Panc1 (cell line): ENCODE measurements at regions of chr11 and their contacts with region 1.

Region 1: GRCh38 chr11:1303126-1303821 is 6.2 kb downstream of the TOLLIP start:
- DNase-seq: no peak
- ATAC-seq: peak; percentile 81
- H3K4me3 ChIP-seq: no peak overlapping the region
- H3K27ac ChIP-seq: no peak overlapping the region
- H3K4me1 ChIP-seq: peaks cover 16% of the 10 kb centered on the region
- H3K27me3 ChIP-seq: no peaks in the 10 kb centered on the region
- CTCF ChIP-seq: peak; percentile 94

Region 2: DNA sequence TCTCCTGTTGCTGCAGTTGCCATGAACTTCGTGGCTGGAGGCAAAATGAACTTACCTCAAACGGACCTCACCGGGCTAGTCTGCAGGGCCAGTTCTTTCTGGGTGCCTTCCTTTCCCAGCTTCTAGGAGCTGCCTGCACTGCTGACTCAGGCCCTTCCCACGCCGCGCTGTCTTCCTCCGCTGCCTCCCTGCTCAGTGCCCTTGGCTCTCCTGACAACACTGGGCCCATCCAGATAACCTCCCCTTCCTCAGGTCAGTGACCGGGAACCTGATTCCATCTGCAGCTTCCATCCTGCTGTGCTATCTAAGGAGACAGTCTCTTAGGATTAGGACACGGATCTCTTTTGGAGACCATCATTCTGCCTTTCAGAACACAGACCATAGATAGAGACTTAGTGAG is 164.0 kb after region 1 on chr11:
- CTCF ChIA-PET with region 1: interaction called, 16 read pairs
- POLR2A ChIA-PET with region 1: no interaction called
- in situ Hi-C with region 1: no loop called
- intact Hi-C with region 1: no loop called
- DNase-seq: no peak
- ATAC-seq: no peak
- H3K4me3 ChIP-seq: no peak overlapping the region
- H3K27ac ChIP-seq: no peak overlapping the region
- H3K4me1 ChIP-seq: no peaks in the 10 kb centered on the region
- H3K27me3 ChIP-seq: no peaks in the 10 kb centered on the region
- CTCF ChIP-seq: no peak

Region 3: GRCh38 chr11:1486114-1486825 is 183.0 kb after region 1 on chr11 and contains the start of gene MOB2:
- CTCF ChIA-PET with region 1: interaction called, 12 read pairs
- POLR2A ChIA-PET with region 1: no interaction called
- in situ Hi-C with region 1: no loop called
- intact Hi-C with region 1: no loop called
- DNase-seq: no peak
- ATAC-seq: peak; percentile 43; the same call in 1 of the 2 replicates
- H3K4me3 ChIP-seq: no peak within 1 kb of the TSS
- H3K27ac ChIP-seq: no peak within 1 kb of the TSS
- H3K4me1 ChIP-seq: peaks cover 27% of the 10 kb centered on the region
- H3K27me3 ChIP-seq: no peaks in the 10 kb centered on the region
- CTCF ChIP-seq: no peak
- total RNA-seq, gene MOB2: 51.2 TPM